ENCODE measurements at regions of chr7 and their contacts with region 1.

Region 1: DNA sequence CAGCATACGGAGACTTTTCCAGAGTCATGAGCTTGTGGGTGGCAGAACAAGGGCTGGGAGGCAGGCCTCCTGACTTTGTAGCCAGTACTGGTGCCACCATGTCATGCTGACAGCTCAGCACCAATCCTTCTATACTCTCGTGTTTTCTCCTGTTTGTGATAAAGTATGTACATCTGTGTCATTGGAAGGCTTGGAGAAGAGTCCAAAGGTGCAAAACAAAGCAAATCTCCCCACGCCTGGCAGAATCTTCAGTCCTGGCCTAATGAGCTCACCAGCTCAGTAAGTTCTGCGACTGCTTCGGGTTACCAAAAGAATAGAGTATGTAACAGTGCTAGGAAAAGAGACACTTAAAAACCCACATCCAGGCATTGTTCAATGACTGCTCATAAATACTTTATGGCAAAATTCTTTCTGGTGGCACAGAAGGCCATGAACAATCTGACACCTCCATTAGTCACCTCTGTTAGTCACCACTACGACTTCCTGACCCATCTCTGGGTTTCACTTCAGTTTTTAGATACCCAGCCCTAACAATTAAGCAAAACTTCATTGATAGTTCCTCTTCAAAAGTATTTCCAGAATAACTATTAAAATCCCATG is 24.5 kb downstream of the STEAP1 start:
- DNase-seq: no peak
- H3K4me3 Mint-ChIP-seq: peak overlapping the region; percentile 3
- H3K27ac Mint-ChIP-seq: peak overlapping the region; percentile 81
- H3K4me1 Mint-ChIP-seq: peaks cover 25% of the 10 kb centered on the region
- H3K27me3 Mint-ChIP-seq: peaks cover 2% of the 10 kb centered on the region

Region 2: DNA sequence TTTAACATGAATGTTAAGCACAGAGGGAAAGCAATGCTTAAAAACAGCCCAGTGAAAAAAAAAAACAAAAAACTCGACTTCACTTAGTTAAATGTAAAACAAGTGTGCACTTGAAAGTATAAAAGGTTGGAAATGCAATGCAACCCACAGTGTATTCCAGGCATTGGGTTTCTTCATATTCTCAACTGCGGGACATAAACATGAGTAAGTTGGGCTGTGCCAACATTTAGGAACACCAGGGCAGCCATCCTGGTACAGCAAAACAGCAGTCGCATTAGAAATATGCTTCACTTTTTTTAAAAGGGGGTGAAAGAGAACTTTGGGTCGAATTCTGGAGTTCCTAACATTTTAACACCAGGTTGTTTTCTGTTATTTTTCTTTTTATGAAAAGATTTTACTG is 23.6 kb before region 1 on chr7:
- CTCF ChIA-PET with region 1: interaction called, 10 read pairs
- POLR2A ChIA-PET with region 1: no interaction called
- DNase-seq: no peak
- H3K4me3 Mint-ChIP-seq: no peak overlapping the region
- H3K27ac Mint-ChIP-seq: no peak overlapping the region
- H3K4me1 Mint-ChIP-seq: peaks cover 5% of the 10 kb centered on the region
- H3K27me3 Mint-ChIP-seq: peaks cover 27% of the 10 kb centered on the region